Activated CD8-positive, alpha-beta T cell treated with anti-CD3 and anti-CD28 coated beads for 36 hours (primary cell): ENCODE measurements at regions of chr1 and their contacts with region 1.

Region 1: DNA sequence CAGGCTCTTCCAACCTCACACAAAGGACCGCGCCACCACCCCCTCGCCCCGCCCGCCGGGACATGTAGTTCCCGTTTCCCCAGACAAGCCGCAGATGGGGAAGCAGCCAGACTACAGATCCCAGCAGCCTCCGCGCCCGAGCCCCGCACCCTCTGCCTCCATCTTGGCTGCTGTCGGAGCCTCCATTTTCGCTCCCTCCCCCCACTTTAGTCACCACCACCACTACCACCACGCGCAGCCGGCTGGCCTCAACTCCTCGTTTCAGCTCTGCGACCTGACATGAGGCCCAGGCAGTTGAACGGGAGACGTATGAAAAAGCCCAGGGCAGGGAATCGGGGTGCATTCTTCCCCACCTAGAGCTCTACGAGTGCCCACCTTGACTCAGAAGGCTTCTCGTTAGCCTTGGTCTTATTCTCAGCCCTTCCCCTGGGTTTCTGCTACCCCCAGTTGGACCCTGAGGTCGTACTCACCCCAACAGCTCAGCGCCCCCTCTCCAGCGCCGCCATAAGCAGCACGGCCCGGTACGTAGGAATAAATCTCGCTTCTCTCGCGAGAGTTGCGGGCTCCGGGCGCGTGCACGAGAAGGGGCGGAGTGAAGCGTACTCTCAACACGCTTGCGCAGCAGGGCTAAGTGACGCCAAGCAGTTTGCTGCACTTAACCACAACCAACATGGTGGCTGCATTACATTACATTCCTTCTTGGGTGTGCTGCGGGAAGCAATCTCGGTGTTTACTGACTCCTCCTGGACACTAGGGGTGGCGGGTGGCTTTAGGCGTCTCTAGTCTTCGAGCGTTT is at the start of gene CSDE1:
- DNase-seq: peak; percentile 98
- ATAC-seq: peak; percentile 87
- H3K4me3 Mint-ChIP-seq: peak within 1 kb of the TSS; percentile 90
- H3K27ac Mint-ChIP-seq: peak within 1 kb of the TSS; percentile 100
- H3K4me1 Mint-ChIP-seq: peaks cover 45% of the 10 kb centered on the region
- H3K27me3 Mint-ChIP-seq: no peaks in the 10 kb centered on the region
- CTCF ChIP-seq: peak; percentile 31
- total RNA-seq, gene CSDE1: 496 to 514 TPM

Region 2: DNA sequence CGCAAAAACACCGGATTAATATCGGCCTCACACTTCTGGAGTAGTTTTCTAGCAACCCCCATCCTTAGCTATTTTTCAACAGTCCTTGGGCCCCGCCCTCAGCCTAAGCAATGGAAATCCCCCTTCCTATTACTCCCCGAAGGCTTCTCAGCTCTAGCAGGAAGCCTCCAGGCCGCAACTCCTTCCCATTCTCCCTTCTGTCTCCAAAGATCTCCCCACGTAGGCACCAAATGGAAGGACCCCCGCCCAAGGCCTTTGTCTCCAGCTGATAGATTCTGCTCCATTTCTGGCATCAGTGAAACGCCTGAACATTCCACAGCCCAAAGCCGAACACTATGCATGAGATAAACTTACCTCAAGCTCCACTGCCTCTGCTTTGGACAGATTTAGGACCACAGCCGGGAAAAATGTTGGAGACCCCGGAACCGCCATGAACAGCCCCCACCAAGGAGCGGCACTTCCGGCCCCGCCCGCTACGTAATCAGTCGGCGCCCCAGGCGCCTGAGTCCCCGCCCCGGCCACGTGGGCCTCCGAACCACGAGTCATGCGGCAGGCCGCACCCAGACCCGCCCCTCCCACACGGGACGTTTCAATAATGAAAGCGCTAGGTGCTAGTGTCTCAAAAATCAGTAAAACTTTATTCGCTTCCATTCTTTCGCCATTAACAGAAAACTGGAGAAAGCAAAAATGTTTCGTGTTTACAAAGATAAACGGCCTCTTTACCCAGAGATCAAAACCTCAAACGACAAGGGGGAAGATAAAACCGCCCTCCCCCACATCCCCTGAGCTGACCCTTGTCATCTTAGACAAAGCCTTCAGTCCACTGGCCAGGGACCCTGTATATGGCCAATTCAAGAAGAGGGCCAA is 41.1 kb before region 1 on chr1 and contains the start of gene NRAS:
- CTCF ChIA-PET with region 1: no interaction called
- POLR2A ChIA-PET with region 1: interaction called, 29 read pairs
- intact Hi-C with region 1: loop called (anchors 5 kb)
- DNase-seq: peak; percentile 97
- ATAC-seq: peak; percentile 94
- H3K4me3 Mint-ChIP-seq: peak within 1 kb of the TSS; percentile 98
- H3K27ac Mint-ChIP-seq: peak within 1 kb of the TSS; percentile 99
- H3K4me1 Mint-ChIP-seq: peaks cover 27% of the 10 kb centered on the region
- H3K27me3 Mint-ChIP-seq: no peaks in the 10 kb centered on the region
- CTCF ChIP-seq: no peak
- total RNA-seq, gene NRAS: 49.1 to 49.9 TPM

Region 3: DNA sequence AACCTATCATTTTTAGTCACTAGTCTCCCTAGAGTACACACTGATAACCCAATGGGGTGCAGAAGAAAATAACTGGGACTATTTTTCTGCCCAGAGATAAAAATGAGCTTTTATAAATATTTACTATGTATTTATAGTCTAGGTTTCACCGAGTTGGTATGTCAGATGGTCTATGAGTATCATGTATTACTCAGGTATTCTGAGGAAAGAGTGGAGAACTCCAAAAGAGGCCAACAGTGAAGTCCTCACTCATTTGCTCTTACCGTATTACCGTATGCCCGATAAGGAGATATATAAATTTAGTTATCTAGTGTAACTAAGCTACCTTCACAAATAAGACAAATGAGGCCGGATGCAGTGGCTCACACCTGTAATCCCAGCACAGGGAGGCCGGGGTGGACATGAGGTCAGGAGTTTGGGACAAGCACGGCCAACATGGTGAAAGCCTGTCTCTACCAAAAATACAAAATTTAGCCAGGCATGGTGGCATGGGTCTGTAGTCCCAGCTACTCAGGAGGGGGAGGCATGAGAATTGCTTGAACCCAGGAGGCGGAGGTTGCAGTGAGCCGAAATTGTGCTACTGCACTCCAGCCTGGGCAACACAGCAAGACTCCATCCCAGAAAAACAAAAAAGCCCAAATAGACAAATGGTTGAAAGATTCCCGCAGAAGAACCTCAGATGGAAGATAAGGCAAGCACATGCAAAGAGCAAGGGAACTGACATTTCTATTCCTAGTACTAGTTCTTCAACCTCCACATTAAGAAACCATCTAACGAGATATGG is 15.5 kb before region 1 on chr1:
- CTCF ChIA-PET with region 1: no interaction called
- POLR2A ChIA-PET with region 1: interaction called, 15 read pairs
- intact Hi-C with region 1: no loop called
- DNase-seq: no peak
- ATAC-seq: no peak
- H3K4me3 Mint-ChIP-seq: no peak overlapping the region
- H3K27ac Mint-ChIP-seq: peak overlapping the region; percentile 43
- H3K4me1 Mint-ChIP-seq: peaks cover 60% of the 10 kb centered on the region
- H3K27me3 Mint-ChIP-seq: no peaks in the 10 kb centered on the region
- CTCF ChIP-seq: no peak

Region 4: GRCh38 chr1:114780344-114781226 is 22.9 kb after region 1 on chr1 and contains the start of gene SIKE1:
- CTCF ChIA-PET with region 1: no interaction called
- POLR2A ChIA-PET with region 1: interaction called, 9 read pairs
- intact Hi-C with region 1: loop called (anchors 2 kb)
- DNase-seq: peak; percentile 97
- ATAC-seq: peak; percentile 99
- H3K4me3 Mint-ChIP-seq: peak within 1 kb of the TSS; percentile 100
- H3K27ac Mint-ChIP-seq: peak within 1 kb of the TSS; percentile 99
- H3K4me1 Mint-ChIP-seq: peaks cover 24% of the 10 kb centered on the region
- H3K27me3 Mint-ChIP-seq: no peaks in the 10 kb centered on the region
- CTCF ChIP-seq: no peak
- total RNA-seq, gene SIKE1: 68.1 to 68.7 TPM